PC-3 (cell line): ENCODE measurements at regions of chr3 and their contacts with region 1.

Region 1: DNA sequence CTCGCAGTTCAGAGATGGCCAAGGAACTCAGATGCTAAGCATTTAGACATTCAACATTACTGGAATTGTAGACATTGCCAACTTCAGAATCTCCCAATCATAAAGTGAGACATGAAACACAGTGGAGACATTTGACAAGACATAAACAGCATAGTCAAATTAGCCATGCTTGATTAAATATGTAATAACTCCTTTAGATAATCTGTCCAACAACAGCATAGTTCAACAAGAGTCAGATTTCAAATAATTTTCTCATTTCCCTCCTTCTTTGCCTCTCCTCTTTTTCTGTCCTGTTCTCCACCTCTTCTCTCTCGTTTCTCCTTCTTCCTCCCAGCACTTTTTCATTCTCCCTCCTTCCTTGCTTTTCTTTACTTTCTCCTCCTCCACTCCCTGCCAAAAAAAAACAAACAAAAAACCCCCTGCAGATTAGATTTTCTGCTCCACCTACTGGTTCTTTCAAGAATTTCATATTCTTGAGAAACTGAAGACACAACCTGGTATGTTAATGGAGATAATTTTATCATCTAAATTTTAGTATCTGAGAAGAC is 20.2 kb downstream of the CPOX start:
- DNase-seq: peak; percentile 76
- ATAC-seq: peak; percentile 60
- H3K4me3 ChIP-seq: no peak overlapping the region
- H3K27ac ChIP-seq: no peak overlapping the region
- H3K4me1 ChIP-seq: peaks cover 16% of the 10 kb centered on the region
- H3K27me3 ChIP-seq: no peaks in the 10 kb centered on the region
- CTCF ChIP-seq: peak; percentile 89

Region 2: GRCh38 chr3:98188545-98188944 is 384.7 kb before region 1 on chr3:
- CTCF ChIA-PET with region 1: no interaction called
- POLR2A ChIA-PET with region 1: no interaction called
- intact Hi-C with region 1: loop called (anchors 5 kb)
- DNase-seq: peak; percentile 56
- ATAC-seq: peak; percentile 85
- H3K4me3 ChIP-seq: no peak overlapping the region
- H3K27ac ChIP-seq: no peak overlapping the region
- H3K4me1 ChIP-seq: no peaks in the 10 kb centered on the region
- H3K27me3 ChIP-seq: peaks cover 13% of the 10 kb centered on the region; the same call in 1 of the 2 replicates
- CTCF ChIP-seq: peak; percentile 65

Region 3: DNA sequence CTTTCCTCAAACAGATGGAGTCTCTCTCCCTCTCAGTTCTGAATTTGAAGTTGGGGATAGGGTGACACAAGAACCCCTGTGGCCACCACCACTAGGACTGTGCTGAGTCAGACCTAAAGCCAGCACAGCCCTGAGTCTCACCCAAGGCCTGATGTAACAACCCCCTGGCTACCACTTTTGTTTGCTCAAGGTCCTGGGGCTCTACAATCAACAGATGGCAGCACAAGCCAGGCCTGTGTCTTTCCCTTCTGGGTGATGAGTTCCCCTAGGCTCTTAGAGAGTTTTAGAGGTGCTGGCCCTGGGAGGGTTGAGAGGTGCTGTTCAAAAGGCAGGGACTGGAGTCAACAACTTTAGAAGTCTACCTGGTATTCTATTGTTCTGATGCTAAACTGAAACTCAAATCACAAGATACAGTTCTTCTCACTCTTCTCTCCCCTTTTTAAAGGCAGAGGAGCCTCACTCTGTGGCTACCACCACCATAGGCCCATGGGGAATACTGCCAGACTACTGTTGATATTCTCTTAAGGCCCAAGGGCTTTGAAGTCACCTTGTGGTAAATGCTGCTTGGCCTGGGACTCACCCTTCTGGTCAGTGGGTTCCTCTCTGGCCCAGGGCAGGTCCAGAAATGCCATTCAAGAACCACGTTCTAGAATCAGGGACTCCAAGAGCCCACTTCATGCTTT is 213.1 kb before region 1 on chr3:
- CTCF ChIA-PET with region 1: no interaction called
- POLR2A ChIA-PET with region 1: no interaction called
- intact Hi-C with region 1: loop called (anchors 1 kb)
- DNase-seq: peak; percentile 65
- ATAC-seq: peak; percentile 68
- H3K4me3 ChIP-seq: no peak overlapping the region
- H3K27ac ChIP-seq: no peak overlapping the region
- H3K4me1 ChIP-seq: no peaks in the 10 kb centered on the region
- H3K27me3 ChIP-seq: peaks cover 5% of the 10 kb centered on the region
- CTCF ChIP-seq: peak; percentile 54; the same call in 1 of the 2 replicates

Region 4: GRCh38 chr3:98741121-98741716 is 168.0 kb after region 1 on chr3:
- CTCF ChIA-PET with region 1: no interaction called
- POLR2A ChIA-PET with region 1: no interaction called
- intact Hi-C with region 1: no loop called
- DNase-seq: peak; percentile 71
- ATAC-seq: peak; percentile 91
- H3K4me3 ChIP-seq: no peak overlapping the region
- H3K27ac ChIP-seq: no peak overlapping the region
- H3K4me1 ChIP-seq: peaks cover 26% of the 10 kb centered on the region
- H3K27me3 ChIP-seq: no peaks in the 10 kb centered on the region
- CTCF ChIP-seq: no peak

Region 5: DNA sequence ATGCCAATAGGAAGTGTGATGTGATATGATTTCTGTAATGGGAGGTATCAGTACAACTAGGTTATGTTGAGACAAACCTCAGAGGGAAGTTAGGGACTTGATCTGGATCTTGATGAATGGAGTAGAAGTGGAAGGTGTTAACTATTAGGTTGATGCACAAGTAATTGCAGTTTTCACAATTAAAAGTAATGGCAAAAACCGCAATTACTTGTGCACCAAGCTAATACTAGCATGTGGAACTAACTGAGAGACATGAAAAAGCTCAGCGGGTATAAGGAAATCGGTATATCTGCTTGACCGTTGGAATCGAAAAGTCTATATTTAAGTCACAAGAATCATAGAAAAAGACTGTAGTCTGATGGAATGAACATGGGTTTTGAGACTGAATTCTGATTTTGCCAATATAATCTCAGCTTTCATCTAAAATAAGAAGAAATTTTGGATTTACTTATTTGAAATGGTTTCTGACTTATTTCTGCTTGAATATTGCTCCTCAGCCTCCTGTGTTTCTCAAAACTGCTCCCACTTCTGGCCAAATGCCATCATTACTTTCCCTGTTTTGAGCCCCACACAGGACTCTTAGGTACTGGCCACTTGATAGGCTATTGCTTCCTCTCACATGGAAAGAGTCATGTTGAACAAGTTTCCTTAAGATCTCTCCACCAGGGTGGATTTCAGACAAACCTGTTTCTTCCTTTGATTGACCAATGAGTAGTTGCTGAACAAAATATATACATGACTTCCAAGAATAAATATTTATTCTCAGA is 793.6 kb after region 1 on chr3:
- CTCF ChIA-PET with region 1: no interaction called
- POLR2A ChIA-PET with region 1: no interaction called
- intact Hi-C with region 1: no loop called
- DNase-seq: peak; percentile 34
- ATAC-seq: no peak; the same call in 1 of the 2 replicates
- H3K4me3 ChIP-seq: no peak overlapping the region
- H3K27ac ChIP-seq: no peak overlapping the region
- H3K4me1 ChIP-seq: peaks cover 18% of the 10 kb centered on the region
- H3K27me3 ChIP-seq: no peaks in the 10 kb centered on the region
- CTCF ChIP-seq: 0 out of 2 replicates have a peak, but pooled peaks have one; percentile 28